ENCODE measurements at regions of chr15 and their contacts with region 1.

Region 1: DNA sequence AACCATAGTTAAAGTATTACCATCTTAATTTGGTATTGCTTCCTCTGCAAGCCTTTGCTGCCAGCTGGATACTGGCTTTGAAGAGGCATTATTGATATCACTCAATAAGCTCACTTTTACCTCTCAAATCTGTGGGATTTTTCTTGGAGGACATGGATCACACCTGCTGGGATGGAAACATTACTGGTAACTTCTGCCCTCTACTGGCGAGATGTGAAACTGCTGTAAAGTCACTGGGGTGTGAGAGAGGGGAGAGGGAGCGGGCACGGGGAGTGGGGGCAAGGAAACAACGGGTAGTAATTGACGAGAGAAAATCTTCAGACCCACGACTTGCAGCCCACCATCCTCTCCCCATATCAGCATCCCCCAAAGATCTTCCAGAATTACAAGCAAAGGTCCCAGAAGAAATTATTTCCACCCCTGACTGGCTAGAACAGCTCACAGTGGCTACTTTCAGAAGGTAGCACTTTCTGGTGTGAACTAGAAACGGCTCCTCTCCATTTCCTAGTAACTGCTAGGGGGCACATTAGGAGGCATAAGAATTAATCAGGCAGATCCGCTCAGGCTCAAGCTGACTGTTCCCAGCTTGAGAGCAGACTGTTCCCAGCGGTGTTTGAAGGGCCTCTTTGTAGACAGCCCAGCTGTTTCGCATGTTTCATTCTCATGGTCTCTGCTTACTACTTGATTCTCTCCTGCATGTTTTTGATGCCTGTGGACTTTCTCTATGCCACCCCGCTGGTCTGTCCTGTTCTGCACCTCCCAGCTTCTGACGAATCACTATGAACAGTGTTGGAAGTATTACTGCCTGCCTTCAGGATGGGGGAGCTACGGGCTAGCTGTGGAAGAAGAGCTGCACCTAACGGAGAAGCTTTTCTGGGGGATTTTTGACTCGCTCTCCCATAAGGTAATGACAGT is 230.4 kb upstream of the CHRM5 start:
- DNase-seq: no peak
- H3K4me3 Mint-ChIP-seq: no peak overlapping the region
- H3K27ac Mint-ChIP-seq: no peak overlapping the region
- H3K4me1 Mint-ChIP-seq: no peaks in the 10 kb centered on the region
- H3K27me3 Mint-ChIP-seq: no peaks in the 10 kb centered on the region

Region 2: GRCh38 chr15:33963831-33964664 is 226.1 kb after region 1 on chr15:
- intact Hi-C with region 1: loop called (anchors 5 kb)
- DNase-seq: no peak
- H3K4me3 Mint-ChIP-seq: no peak overlapping the region
- H3K27ac Mint-ChIP-seq: no peak overlapping the region
- H3K4me1 Mint-ChIP-seq: no peaks in the 10 kb centered on the region
- H3K27me3 Mint-ChIP-seq: no peaks in the 10 kb centered on the region

Measured in activated T-helper 1 cell treated with anti-CD3 and anti-CD28 coated beads, Interleukin-12 subunit alpha, Interleukin-12 subunit beta, Interleukin-2, Interleukin-4 antibody, amounts not matched to agents 30 ng/mL and 10 ng/mL and 1 ng/mL, durations not matched to agents 14 hours and 24 hours and 36 hours (primary cell).